Activated T-helper 1 cell treated with anti-CD3 and anti-CD28 coated beads, Interleukin-12 subunit alpha, Interleukin-12 subunit beta, Interleukin-2, Interleukin-4 antibody, amounts not matched to agents 30 ng/mL and 10 ng/mL and 1 ng/mL, durations not matched to agents 14 hours and 24 hours and 36 hours (primary cell): ENCODE measurements at regions of chr2 and their contacts with region 1.

Region 1: GRCh38 chr2:195533771-195534642 is 123.0 kb upstream of the SLC39A10 start:
- DNase-seq: peak; percentile 60
- H3K4me3 Mint-ChIP-seq: peak overlapping the region; percentile 82
- H3K27ac Mint-ChIP-seq: peak overlapping the region; percentile 96
- H3K4me1 Mint-ChIP-seq: peaks cover 86% of the 10 kb centered on the region
- H3K27me3 Mint-ChIP-seq: no peaks in the 10 kb centered on the region

Region 2: DNA sequence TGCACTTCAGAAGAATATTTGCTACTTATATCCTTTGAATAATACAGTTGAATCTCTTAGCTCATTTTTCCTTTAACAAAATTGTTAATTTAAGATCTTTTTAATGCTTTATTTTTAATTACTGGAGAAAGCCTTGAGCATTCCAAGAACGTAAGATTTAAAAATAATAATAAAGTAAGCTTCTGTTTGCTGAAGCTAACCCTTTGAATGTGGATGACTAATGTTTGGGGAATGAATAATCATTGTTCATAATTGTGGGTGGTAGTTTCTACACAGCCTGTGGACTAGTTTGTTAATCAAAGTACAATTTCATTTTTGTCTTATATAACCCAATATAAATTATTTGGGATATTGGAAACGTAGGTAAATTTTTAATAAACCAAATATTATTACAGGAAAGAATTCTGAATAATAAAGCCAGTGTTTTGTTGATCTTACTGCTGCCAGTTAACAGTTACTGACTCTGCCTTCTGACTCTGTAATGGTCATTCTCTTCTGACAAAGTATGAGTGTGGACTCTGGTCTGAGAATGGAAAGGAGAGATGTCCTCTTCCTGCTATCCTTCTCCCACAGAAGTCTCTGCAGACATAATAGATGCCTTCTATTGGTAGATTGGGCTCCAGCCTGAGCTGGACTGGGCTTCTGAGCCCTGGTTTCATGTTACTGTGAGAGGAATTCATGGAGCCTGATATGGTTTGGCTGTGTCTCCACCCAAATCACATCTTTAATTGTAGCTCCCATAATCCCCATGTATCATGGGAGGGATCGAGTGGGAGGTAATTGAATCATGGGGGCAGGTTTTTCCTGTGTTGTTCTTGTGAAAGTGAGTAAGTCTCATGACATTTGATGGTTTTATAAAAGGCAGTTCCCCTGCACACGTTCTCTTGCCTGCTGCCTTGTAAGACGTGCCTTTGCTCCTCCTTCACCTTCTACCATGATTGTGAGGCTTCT is 169.7 kb before region 1 on chr2:
- intact Hi-C with region 1: loop called (anchors 5 kb)
- DNase-seq: no peak
- H3K4me3 Mint-ChIP-seq: no peak overlapping the region
- H3K27ac Mint-ChIP-seq: no peak overlapping the region
- H3K4me1 Mint-ChIP-seq: peaks cover 20% of the 10 kb centered on the region
- H3K27me3 Mint-ChIP-seq: no peaks in the 10 kb centered on the region

Region 3: DNA sequence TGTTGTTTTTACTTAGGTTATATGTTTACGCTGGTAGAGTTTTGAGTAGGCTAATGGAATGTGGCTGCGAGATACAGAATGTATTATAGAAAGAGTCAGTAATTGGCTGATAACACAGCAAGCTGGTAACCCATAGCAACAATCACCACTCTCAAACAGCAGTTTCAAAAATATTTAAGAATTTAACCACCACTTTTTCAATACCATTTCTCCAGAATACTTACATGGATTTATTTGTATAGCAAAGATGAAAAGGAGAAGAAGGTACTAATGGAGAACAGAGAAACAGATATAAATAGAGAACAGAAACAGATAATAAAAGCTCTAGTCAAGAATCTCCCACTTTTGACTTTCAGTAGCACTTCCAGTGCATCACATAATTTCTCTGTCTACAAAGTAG is 65.2 kb before region 1 on chr2:
- intact Hi-C with region 1: no loop called
- DNase-seq: no peak
- H3K4me3 Mint-ChIP-seq: no peak overlapping the region
- H3K27ac Mint-ChIP-seq: no peak overlapping the region
- H3K4me1 Mint-ChIP-seq: peaks cover 21% of the 10 kb centered on the region
- H3K27me3 Mint-ChIP-seq: no peaks in the 10 kb centered on the region

Region 4: DNA sequence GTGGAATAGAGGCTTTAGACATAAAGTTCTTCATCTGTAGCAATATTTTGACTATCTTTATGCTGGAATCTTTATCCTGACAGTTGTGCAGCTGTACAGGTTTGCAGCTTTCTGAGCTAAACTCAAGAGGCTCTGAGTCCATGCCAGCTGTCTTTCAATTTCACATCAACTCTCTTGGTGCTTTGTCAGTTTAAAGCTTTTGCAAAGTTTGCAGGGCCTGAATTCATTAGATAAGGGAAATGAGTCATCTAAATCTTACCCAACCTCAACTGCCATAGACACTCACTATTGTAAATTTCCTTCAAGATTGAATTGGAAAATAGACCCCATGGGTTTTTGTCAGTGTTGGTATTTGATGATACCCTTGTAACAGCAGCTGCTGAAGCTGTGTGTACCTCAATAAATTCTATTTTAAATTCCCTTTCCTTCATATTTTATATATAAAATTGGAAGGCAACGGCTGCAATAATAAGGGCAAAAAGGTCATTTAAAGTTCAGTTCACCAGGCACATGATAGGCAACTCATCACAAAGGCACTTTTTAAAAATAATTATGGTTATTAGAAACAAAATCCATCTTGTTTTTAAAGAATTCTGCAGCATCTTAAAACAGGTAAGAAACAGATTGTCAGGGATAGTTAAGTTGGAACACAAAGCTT is 46.9 kb before region 1 on chr2:
- intact Hi-C with region 1: loop called (anchors 1 kb)
- DNase-seq: peak; percentile 26
- H3K4me3 Mint-ChIP-seq: peak overlapping the region; percentile 32
- H3K27ac Mint-ChIP-seq: peak overlapping the region; percentile 61
- H3K4me1 Mint-ChIP-seq: peaks cover 56% of the 10 kb centered on the region
- H3K27me3 Mint-ChIP-seq: no peaks in the 10 kb centered on the region

Region 5: DNA sequence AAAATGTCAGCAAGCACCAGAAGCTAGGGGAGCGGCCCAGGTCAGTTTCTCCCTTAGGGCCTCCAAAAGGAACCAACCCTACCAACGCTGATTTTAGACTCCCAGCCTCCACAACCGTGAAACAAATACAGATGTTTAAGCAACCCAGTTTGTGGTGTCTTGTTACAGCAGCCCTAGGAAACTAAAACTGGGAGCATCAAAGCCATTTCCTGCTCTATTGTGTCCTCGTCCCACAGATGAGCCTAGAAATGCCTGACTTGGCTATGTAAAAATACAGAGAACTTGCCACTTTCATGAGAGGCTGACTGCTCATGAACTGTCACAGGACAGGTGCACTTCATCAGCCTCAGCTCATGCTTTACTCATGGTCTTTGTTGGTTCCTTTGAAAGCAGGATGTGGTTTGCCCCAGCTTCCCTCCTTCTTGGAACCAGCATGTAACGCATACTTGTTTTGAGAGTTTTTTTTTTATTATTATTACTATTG is 25.5 kb after region 1 on chr2:
- intact Hi-C with region 1: loop called (anchors 1 kb)
- DNase-seq: peak; percentile 81
- H3K4me3 Mint-ChIP-seq: peak overlapping the region; percentile 77
- H3K27ac Mint-ChIP-seq: peak overlapping the region; percentile 96
- H3K4me1 Mint-ChIP-seq: peaks cover 62% of the 10 kb centered on the region
- H3K27me3 Mint-ChIP-seq: no peaks in the 10 kb centered on the region

Region 6: GRCh38 chr2:195737173-195738043 is 203.4 kb after region 1 on chr2:
- intact Hi-C with region 1: no loop called
- DNase-seq: no peak
- H3K4me3 Mint-ChIP-seq: no peak overlapping the region
- H3K27ac Mint-ChIP-seq: no peak overlapping the region
- H3K4me1 Mint-ChIP-seq: no peaks in the 10 kb centered on the region
- H3K27me3 Mint-ChIP-seq: no peaks in the 10 kb centered on the region

Region 7: DNA sequence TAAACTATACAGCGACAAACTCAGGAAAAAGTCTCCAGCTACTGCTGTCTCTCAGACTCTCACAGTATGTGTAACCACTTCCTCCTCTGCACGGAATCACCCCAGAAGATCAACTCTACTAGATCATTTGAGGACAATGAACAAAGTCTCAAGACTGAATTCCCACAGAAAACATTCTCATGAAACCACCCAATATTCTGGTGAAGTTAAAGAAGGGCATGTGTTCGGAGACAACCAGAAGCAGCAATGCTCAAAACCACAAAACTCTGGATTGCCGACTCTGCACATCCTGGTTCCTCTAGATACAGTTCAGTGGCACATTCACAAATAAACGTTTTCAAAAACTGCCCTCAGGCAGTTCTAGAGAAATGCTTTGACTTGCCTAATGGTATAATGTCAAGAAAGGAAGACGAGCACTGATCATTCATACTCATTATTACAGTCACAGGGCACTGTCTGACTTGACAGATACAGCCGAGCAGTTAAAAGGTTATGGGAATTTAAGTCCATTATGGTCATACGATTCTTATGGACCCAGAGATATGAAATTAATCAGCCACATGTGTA is 729.3 kb after region 1 on chr2:
- intact Hi-C with region 1: loop called (anchors 5 kb)
- DNase-seq: peak; percentile 57
- H3K4me3 Mint-ChIP-seq: peak overlapping the region; percentile 65
- H3K27ac Mint-ChIP-seq: peak overlapping the region; percentile 88
- H3K4me1 Mint-ChIP-seq: peaks cover 79% of the 10 kb centered on the region
- H3K27me3 Mint-ChIP-seq: no peaks in the 10 kb centered on the region